AG04450 (cell line): ENCODE measurements at regions of chr5 and their contacts with region 1.

Region 1: DNA sequence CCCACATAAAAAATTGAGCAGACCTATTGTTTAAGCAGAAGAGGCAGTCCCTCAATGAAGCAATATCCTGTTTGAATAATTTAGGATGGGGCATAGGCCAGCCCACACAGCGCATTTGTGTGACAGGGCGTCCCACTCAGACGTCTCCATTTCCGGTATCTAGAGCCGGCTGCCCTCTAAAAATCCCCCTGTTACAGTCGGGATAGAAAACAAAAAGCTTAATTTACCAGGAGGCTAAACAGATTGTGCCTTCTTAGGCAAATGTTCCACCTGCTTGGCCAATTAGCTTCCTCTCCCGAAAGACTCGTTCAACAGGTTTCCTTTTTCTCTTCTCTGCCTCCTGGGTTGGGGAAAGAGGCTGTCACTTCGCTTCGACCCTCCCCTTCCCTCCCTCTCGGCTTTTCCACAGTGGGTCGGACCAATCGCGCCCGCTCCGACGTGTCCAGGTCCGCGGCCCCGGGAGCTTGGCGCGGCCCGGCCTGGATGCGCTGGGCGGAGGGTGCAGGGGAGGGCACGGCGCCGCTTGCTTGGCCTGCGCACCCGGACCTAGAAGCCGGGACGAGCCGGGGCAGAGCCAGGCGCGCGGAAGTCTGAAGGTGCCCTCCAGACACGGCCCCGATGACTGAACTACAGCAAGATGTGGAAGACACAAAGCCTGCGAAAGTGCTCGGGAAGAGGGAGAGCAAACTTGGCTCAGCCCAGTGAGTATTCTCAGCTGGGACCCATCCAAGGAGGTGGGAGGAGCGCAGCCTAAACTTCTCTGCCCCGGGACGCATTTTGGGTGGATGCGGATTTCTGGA is at the start of gene GRAMD2B:
- DNase-seq: peak; percentile 47
- H3K4me3 ChIP-seq: peak within 1 kb of the TSS; percentile 78
- H3K27ac ChIP-seq: peak within 1 kb of the TSS; percentile 88
- H3K27me3 ChIP-seq: no peaks in the 10 kb centered on the region
- CTCF ChIP-seq: no peak
- polyA plus RNA-seq, gene GRAMD2B: 9.4 and 11.9 TPM in 2 replicates

Region 2: DNA sequence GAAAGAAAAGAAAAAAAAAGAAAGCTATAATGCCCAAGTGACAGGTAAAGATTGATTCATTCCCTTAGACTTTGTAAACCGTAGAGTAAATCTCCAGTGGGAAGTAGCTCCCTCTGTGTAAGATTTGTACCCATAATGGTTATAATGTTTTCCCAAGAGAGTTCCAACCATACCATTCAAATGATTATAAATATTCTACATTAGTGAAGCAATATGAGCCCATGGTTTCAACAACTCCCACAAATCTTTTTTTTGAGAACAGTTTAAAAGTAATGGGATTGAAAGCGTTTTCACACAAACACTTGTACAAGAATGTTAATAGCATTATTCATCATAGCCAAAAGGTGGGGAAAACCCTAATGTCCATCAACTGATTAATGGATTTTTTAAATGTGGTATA is 58.1 kb after region 1 on chr5:
- CTCF ChIA-PET with region 1: no interaction called
- POLR2A ChIA-PET with region 1: interaction called, 13 read pairs
- DNase-seq: peak; percentile 55
- H3K4me3 ChIP-seq: no peak overlapping the region
- H3K27ac ChIP-seq: no peak overlapping the region
- H3K27me3 ChIP-seq: no peaks in the 10 kb centered on the region
- CTCF ChIP-seq: no peak